HepG2 (cell line): ENCODE measurements at regions of chrX and their contacts with region 1.

Region 1: DNA sequence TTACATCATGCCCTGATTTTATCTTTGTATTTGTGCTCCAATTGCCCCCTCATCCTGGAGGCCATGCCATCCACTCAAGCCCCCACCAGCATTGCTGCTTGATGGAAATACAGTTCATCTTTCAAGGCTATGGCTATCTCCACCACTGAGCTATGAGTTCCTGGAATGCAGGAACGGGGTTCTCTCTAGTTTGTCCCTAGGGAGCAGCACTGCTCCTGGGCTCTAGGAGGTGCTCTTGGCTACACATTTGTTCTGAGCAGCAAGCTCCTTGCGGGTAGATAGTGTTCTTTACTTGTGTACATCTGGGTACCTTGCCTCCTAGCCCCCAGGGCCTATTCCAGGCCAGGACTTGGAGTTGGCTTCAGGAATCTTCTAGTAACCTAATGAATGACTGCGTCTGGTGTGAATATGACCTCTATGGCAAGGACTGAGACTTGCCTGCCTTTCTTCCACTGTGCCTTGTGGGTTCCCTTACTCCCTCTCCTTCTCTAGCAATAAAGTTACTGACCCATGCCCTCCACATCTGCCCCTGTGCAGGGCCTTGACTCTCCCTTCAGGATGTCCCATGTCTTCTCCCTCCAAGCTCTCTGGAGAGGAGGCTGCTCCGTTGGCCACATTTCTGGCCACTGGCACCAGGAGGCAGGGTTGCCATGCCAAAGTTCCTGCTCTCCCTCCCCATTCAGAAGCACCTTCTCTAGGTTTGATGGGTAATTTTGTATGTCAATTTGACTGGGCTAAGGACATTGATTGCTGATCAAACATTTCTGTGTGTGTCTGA is 7.6 kb downstream of the CITED1 start:
- DNase-seq: peak; percentile 16
- ATAC-seq: peak; percentile 95
- H3K4me3 ChIP-seq: no peak overlapping the region
- H3K27ac ChIP-seq: no peak overlapping the region
- H3K4me1 ChIP-seq: no peaks in the 10 kb centered on the region
- H3K27me3 ChIP-seq: peaks cover 0 to 11% of the 10 kb centered on the region in 2 experiments; a peak in 3 of 5 replicates
- CTCF ChIP-seq: peak; percentile 75
- EP300 ChIP-seq: no peak
- POLR2A ChIP-seq: no peak
- RAD21 ChIP-seq: no peak

Region 2: GRCh38 chrX:72216973-72217372 is 81.2 kb before region 1 on chrX:
- CTCF ChIA-PET with region 1: no interaction called
- POLR2A ChIA-PET with region 1: no interaction called
- in situ Hi-C with region 1: no loop called
- intact Hi-C with region 1: no loop called
- DNase-seq: no peak
- ATAC-seq: no peak
- H3K4me3 ChIP-seq: no peak overlapping the region
- H3K27ac ChIP-seq: no peak overlapping the region
- H3K4me1 ChIP-seq: 0 out of 2 replicates have a peak, but pooled peaks cover 7% of the 10 kb centered on the region
- H3K27me3 ChIP-seq: no peaks in the 10 kb centered on the region
- CTCF ChIP-seq: no peak
- EP300 ChIP-seq: no peak
- POLR2A ChIP-seq: no peak
- RAD21 ChIP-seq: no peak

Region 3: DNA sequence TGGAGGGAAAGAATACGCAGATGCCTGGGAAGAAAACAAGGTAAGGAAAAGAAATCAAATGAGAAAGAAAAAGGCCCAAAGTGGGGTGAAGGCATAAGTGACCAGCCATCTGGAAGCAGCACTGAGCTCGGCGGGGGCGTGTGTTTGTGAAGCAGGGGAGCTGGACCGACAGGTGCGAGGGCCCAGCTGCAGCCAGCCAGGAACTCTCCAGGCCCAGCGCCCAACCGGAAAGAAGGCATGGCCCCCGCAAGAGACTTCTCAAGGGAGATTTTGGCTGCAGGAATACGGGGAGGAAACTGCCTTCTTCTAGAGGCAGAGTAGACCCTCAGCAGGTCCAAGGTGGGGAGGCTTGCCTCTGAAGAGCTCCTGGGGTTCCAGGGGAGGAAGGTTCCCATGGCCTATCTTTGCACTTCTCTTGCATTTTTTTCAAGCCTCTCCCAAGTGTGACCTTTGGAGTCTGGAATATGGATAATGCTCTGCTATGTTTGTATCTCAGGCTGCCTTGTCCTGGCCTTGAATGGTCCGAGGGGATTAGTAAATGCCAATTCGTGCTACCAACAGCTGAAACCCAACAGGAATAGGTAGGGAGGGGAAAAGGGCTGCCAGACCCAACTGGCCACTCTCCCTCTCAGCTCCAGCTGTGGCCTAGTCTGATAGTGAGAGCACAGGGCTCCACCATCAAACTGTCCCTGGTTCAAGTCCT is 18.4 kb after region 1 on chrX:
- CTCF ChIA-PET with region 1: no interaction called
- POLR2A ChIA-PET with region 1: no interaction called
- in situ Hi-C with region 1: no loop called
- intact Hi-C with region 1: no loop called
- DNase-seq: no peak
- ATAC-seq: peak; percentile 56
- H3K4me3 ChIP-seq: no peak overlapping the region
- H3K27ac ChIP-seq: no peak overlapping the region
- H3K4me1 ChIP-seq: peaks cover 9% of the 10 kb centered on the region; the same call in 1 of the 2 replicates
- H3K27me3 ChIP-seq: no peaks in the 10 kb centered on the region
- CTCF ChIP-seq: no peak
- EP300 ChIP-seq: no peak
- POLR2A ChIP-seq: no peak
- RAD21 ChIP-seq: no peak

Region 4: GRCh38 chrX:72349190-72349589 is 51.0 kb after region 1 on chrX:
- CTCF ChIA-PET with region 1: no interaction called
- POLR2A ChIA-PET with region 1: no interaction called
- in situ Hi-C with region 1: no loop called
- intact Hi-C with region 1: no loop called
- DNase-seq: no peak
- ATAC-seq: no peak
- H3K4me3 ChIP-seq: no peak overlapping the region
- H3K27ac ChIP-seq: no peak overlapping the region
- H3K4me1 ChIP-seq: no peaks in the 10 kb centered on the region
- H3K27me3 ChIP-seq: no peaks in the 10 kb centered on the region
- CTCF ChIP-seq: no peak
- EP300 ChIP-seq: no peak
- POLR2A ChIP-seq: no peak
- RAD21 ChIP-seq: no peak

Region 5: DNA sequence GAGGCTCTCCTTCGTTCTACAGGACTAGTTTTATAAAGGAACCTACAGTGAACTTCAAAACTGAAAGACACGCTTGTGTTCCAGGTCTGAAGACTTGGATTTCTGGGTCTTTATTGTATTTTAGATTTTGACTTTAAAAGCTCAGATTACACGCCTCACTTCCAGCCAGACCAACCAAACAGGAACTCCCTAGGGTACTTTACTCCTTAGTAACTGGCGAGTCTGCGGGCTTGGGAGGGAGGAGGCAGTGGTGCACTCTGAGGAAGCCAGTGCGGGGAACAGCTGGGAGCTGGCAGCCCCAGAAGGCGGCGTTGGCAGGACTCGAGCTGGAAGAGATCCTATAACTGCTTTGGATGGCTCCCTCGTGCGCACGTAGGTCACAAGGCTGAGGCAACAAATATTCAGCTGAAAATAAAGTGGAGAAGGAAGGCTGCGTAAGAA is 416.4 kb after region 1 on chrX:
- CTCF ChIA-PET with region 1: no interaction called
- POLR2A ChIA-PET with region 1: no interaction called
- in situ Hi-C with region 1: loop called (anchors 25 kb)
- intact Hi-C with region 1: no loop called
- DNase-seq: peak; percentile 12
- ATAC-seq: peak; percentile 83
- H3K4me3 ChIP-seq: peak overlapping the region; percentile 59 to 70 (median 65)
- H3K27ac ChIP-seq: peak overlapping the region; percentile 61
- H3K4me1 ChIP-seq: peaks cover 8% of the 10 kb centered on the region; the same call in 1 of the 2 replicates
- H3K27me3 ChIP-seq: no peaks in the 10 kb centered on the region
- CTCF ChIP-seq: no peak
- EP300 ChIP-seq: no peak
- POLR2A ChIP-seq: no peak; a peak in 1 of 4 replicates
- RAD21 ChIP-seq: no peak